PC-3 (cell line): ENCODE measurements at regions of chr2 and their contacts with region 1.

Region 1: DNA sequence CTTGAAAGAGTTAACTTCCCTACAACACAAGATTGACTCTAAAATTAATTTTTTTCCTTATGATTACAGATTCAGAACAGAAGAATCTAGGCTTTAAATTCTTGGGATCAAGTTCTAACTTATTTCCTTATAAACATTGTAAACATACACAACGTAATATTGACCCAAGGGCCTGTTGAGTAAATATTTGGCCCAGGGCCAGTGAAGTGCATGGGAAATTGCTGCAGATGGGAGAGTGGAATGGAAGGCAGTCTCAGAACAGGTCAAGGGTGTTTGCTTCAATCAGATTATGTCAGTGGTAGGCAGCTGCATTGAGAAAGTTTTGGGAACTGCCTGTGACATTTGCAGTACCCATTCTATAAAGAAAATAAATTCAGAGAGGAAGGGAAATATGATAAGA is 137.6 kb downstream of the MYO1B start:
- DNase-seq: peak; percentile 95
- ATAC-seq: peak; percentile 83
- H3K4me3 ChIP-seq: no peak overlapping the region
- H3K27ac ChIP-seq: peak overlapping the region; percentile 73
- H3K4me1 ChIP-seq: peaks cover 43% of the 10 kb centered on the region
- H3K27me3 ChIP-seq: no peaks in the 10 kb centered on the region
- CTCF ChIP-seq: no peak

Region 2: GRCh38 chr2:191128911-191129304 is 253.9 kb before region 1 on chr2:
- CTCF ChIA-PET with region 1: no interaction called
- POLR2A ChIA-PET with region 1: no interaction called
- intact Hi-C with region 1: no loop called
- DNase-seq: no peak
- ATAC-seq: no peak
- H3K4me3 ChIP-seq: no peak overlapping the region
- H3K27ac ChIP-seq: no peak overlapping the region
- H3K4me1 ChIP-seq: no peaks in the 10 kb centered on the region
- H3K27me3 ChIP-seq: no peaks in the 10 kb centered on the region
- CTCF ChIP-seq: no peak

Region 3: GRCh38 chr2:191404554-191404991 is 21.8 kb after region 1 on chr2:
- CTCF ChIA-PET with region 1: no interaction called
- POLR2A ChIA-PET with region 1: no interaction called
- intact Hi-C with region 1: loop called (anchors 1 kb)
- DNase-seq: peak; percentile 90
- ATAC-seq: peak; percentile 92
- H3K4me3 ChIP-seq: no peak overlapping the region
- H3K27ac ChIP-seq: peak overlapping the region; percentile 39
- H3K4me1 ChIP-seq: peaks cover 28% of the 10 kb centered on the region
- H3K27me3 ChIP-seq: no peaks in the 10 kb centered on the region
- CTCF ChIP-seq: no peak

Region 4: GRCh38 chr2:191417746-191418145 is 34.9 kb after region 1 on chr2:
- CTCF ChIA-PET with region 1: no interaction called
- POLR2A ChIA-PET with region 1: no interaction called
- intact Hi-C with region 1: loop called (anchors 5 kb)
- DNase-seq: no peak
- ATAC-seq: no peak
- H3K4me3 ChIP-seq: no peak overlapping the region
- H3K27ac ChIP-seq: no peak overlapping the region
- H3K4me1 ChIP-seq: no peaks in the 10 kb centered on the region
- H3K27me3 ChIP-seq: no peaks in the 10 kb centered on the region
- CTCF ChIP-seq: no peak

Region 5: GRCh38 chr2:191521608-191522208 is 138.9 kb after region 1 on chr2:
- CTCF ChIA-PET with region 1: no interaction called
- POLR2A ChIA-PET with region 1: no interaction called
- intact Hi-C with region 1: no loop called
- DNase-seq: peak; percentile 65
- ATAC-seq: no peak
- H3K4me3 ChIP-seq: no peak overlapping the region
- H3K27ac ChIP-seq: no peak overlapping the region
- H3K4me1 ChIP-seq: no peaks in the 10 kb centered on the region
- H3K27me3 ChIP-seq: no peaks in the 10 kb centered on the region
- CTCF ChIP-seq: peak; percentile 84

Region 6: DNA sequence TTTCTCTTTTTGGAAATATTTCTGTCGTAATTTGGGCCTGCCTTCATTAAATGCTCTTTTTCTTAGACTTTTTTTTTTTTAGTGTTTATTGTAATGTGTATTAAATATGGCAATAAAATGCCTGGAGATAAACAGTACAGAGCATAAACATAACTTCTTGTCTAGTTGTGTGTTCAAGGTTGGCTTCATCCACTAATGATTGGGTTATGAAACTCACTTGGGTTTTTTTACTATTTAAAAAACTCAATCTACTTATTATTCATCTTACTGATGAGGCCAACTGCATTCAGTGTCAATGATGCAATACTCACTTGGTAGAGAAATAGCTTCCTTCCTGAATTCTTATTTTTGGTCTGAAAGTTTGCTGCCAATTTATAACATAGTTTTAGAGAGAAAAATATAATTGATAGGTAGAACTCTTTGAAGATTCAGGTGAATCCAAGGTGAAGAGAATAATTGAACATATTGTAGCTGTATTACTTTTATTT is 150.9 kb after region 1 on chr2:
- CTCF ChIA-PET with region 1: no interaction called
- POLR2A ChIA-PET with region 1: no interaction called
- intact Hi-C with region 1: no loop called
- DNase-seq: no peak
- ATAC-seq: no peak
- H3K4me3 ChIP-seq: no peak overlapping the region
- H3K27ac ChIP-seq: no peak overlapping the region
- H3K4me1 ChIP-seq: no peaks in the 10 kb centered on the region
- H3K27me3 ChIP-seq: no peaks in the 10 kb centered on the region
- CTCF ChIP-seq: no peak